Thyroid gland (tissue), 4 donors: ENCODE measurements at regions of chr5 and their contacts with region 1.

Region 1: GRCh38 chr5:177497292-177498033 is at the start of gene PDLIM7:
- DNase-seq: peak; percentile 93 to 94
- H3K4me3 ChIP-seq: peak within 1 kb of the TSS; percentile 50 to 73 (median 61)
- H3K27ac ChIP-seq: peak within 1 kb of the TSS; percentile 74 to 84 (median 76)
- H3K4me1 ChIP-seq: peaks cover 19 to 51% of the 10 kb centered on the region in 2 donors
- H3K27me3 ChIP-seq: no peaks in the 10 kb centered on the region
- CTCF ChIP-seq: peak in 1 of 6 experiments; percentile 13
- POLR2A ChIP-seq: peak; percentile 77 to 97
- total RNA-seq, gene PDLIM7: 23.2 to 52.4 (median 34.8) TPM

Region 2: GRCh38 chr5:176994460-176995121 is 502.9 kb before region 1 on chr5:
- intact Hi-C with region 1: no loop called
- DNase-seq: no peak
- H3K4me3 ChIP-seq: no peak overlapping the region
- H3K27ac ChIP-seq: no peak overlapping the region
- H3K4me1 ChIP-seq: peaks cover 0 to 4% of the 10 kb centered on the region in 2 donors
- H3K27me3 ChIP-seq: no peaks in the 10 kb centered on the region
- CTCF ChIP-seq: no peak
- POLR2A ChIP-seq: no peak

Region 3: GRCh38 chr5:177113566-177114424 is 383.7 kb before region 1 on chr5:
- intact Hi-C with region 1: loop called (anchors 10 kb)
- DNase-seq: peak; percentile 74 to 80
- H3K4me3 ChIP-seq: no peak overlapping the region
- H3K27ac ChIP-seq: no peak overlapping the region
- H3K4me1 ChIP-seq: peaks cover 0 to 17% of the 10 kb centered on the region in 2 donors
- H3K27me3 ChIP-seq: no peaks in the 10 kb centered on the region
- CTCF ChIP-seq: peak; percentile 98 to 99 (median 99)
- POLR2A ChIP-seq: no peak

Region 4: GRCh38 chr5:177317959-177318377 is 179.5 kb before region 1 on chr5:
- intact Hi-C with region 1: loop called (anchors 5 kb)
- DNase-seq: peak; percentile 81 to 85
- H3K4me3 ChIP-seq: no peak overlapping the region
- H3K27ac ChIP-seq: no peak overlapping the region
- H3K4me1 ChIP-seq: no peaks in the 10 kb centered on the region
- H3K27me3 ChIP-seq: no peaks in the 10 kb centered on the region
- CTCF ChIP-seq: peak; percentile 74 to 86 (median 83)
- POLR2A ChIP-seq: no peak

Region 5: DNA sequence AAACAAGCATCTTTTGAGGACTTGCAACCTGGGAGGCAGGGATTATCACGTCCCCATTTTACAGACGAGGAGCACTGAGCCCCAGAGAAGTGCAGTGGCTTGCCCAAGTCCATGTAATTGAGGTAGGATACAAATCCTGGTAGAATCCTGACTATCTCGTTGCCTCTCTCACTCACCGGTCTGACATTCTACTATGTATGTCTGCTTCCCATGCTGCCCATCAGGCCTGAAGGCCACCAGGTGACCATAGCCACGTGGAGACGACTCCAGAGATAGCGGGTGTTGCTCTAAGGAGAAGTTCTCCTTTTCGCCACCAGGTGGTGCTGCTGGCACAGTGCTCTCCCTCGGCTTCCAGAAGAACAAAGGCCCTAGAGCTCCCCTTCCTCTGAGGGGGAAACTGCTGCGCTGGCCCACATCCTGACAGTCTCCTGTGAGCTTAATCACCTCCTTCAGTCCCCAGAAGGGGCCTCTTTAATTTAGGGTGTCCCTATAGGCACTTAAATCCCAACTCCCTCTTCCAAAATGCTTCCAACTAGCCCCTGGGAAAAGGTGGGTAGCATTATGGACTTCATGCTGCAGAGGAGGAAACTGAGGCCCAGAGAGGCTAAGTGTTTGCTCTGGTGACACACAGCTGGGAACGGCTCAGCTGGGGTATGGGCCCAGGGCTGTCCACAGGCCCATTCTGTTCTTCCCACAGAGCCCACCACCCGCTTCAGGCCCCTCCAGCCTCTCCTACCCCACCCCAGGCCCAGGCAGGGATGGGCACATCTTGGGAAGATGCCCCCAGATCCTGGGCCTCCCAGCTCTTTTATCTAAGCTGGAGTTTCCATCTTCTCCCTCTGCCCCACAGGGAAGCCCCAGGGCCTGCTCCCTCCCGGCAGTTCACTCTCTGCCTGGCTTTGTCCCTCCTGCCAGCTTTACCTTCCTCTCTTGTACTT is 106.8 kb before region 1 on chr5:
- intact Hi-C with region 1: loop called (anchors 5 kb)
- DNase-seq: peak; percentile 80 to 81
- H3K4me3 ChIP-seq: no peak overlapping the region
- H3K27ac ChIP-seq: no peak overlapping the region
- H3K4me1 ChIP-seq: peaks cover 3 to 20% of the 10 kb centered on the region in 2 donors
- H3K27me3 ChIP-seq: no peaks in the 10 kb centered on the region
- CTCF ChIP-seq: peak; percentile 91 to 97 (median 96)
- POLR2A ChIP-seq: no peak

Region 6: GRCh38 chr5:177568326-177568725 is 70.9 kb after region 1 on chr5:
- intact Hi-C with region 1: no loop called
- DNase-seq: no peak
- H3K4me3 ChIP-seq: no peak overlapping the region
- H3K27ac ChIP-seq: no peak overlapping the region
- H3K4me1 ChIP-seq: no peaks in the 10 kb centered on the region
- H3K27me3 ChIP-seq: no peaks in the 10 kb centered on the region
- CTCF ChIP-seq: no peak
- POLR2A ChIP-seq: no peak